Caco-2 (cell line): ENCODE measurements at regions of chr19 and their contacts with region 1.

Region 1: GRCh38 chr19:38929929-38930775 is at the start of gene SARS2:
- DNase-seq: peak; percentile 95
- H3K4me3 ChIP-seq: peak within 1 kb of the TSS; percentile 85
- H3K4me3 Mint-ChIP-seq: peak within 1 kb of the TSS; percentile 77
- H3K27ac Mint-ChIP-seq: peak within 1 kb of the TSS; percentile 99
- H3K4me1 ChIP-seq: 0 out of 2 replicates have a peak, but pooled peaks cover 5% of the 10 kb centered on the region
- H3K4me1 Mint-ChIP-seq: no peaks in the 10 kb centered on the region
- H3K27me3 ChIP-seq: no peaks in the 10 kb centered on the region
- H3K27me3 Mint-ChIP-seq: no peaks in the 10 kb centered on the region
- CTCF ChIP-seq: peak; percentile 98 to 99
- total RNA-seq, gene SARS2: 66.6 and 85.1 TPM in 2 replicates

Region 2: GRCh38 chr19:38647368-38647965 is 282.7 kb before region 1 on chr19 and contains the start of gene ACTN4:
- CTCF ChIA-PET with region 1: interaction called, 10 read pairs
- POLR2A ChIA-PET with region 1: interaction called, 3 read pairs
- intact Hi-C with region 1: no loop called
- DNase-seq: peak; percentile 98 to 100
- H3K4me3 ChIP-seq: peak within 1 kb of the TSS; percentile 100
- H3K4me3 Mint-ChIP-seq: peak within 1 kb of the TSS; percentile 90
- H3K27ac Mint-ChIP-seq: peak within 1 kb of the TSS; percentile 88
- H3K4me1 ChIP-seq: peaks cover 30% of the 10 kb centered on the region
- H3K4me1 Mint-ChIP-seq: peaks cover 16% of the 10 kb centered on the region
- H3K27me3 ChIP-seq: no peaks in the 10 kb centered on the region
- H3K27me3 Mint-ChIP-seq: no peaks in the 10 kb centered on the region
- CTCF ChIP-seq: no peak
- total RNA-seq, gene ACTN4: 605 and 658 TPM in 2 replicates

Region 3: DNA sequence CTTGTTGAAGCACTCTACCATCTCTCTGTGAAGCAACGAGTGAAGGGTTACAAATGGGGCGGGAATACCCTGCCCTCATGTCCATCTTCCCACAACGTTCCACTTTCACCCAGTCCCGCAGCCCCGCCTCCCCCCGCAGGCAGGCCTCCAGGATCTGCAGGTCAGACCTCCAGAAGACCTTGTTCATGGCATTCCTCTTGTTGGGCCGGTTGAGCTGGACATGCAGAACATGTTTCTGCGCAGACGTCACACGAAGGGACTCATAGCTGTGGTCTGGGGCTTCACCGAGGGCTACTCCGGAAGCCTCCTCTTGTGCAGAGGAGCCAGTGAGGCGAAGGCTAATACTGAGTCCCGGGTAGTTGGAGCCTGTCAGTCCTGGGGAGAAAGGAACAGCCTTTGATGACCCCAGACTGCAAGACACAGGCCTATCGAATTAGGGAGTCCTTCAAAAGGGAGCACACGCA is 99.0 kb before region 1 on chr19:
- CTCF ChIA-PET with region 1: interaction called, 8 read pairs
- POLR2A ChIA-PET with region 1: interaction called, 4 read pairs
- intact Hi-C with region 1: loop called (anchors 2 kb)
- DNase-seq: peak; percentile 91 to 96
- H3K4me3 ChIP-seq: peak overlapping the region; percentile 72
- H3K4me3 Mint-ChIP-seq: peak overlapping the region; percentile 71
- H3K27ac Mint-ChIP-seq: peak overlapping the region; percentile 97
- H3K4me1 ChIP-seq: peaks cover 22% of the 10 kb centered on the region
- H3K4me1 Mint-ChIP-seq: peaks cover 13% of the 10 kb centered on the region
- H3K27me3 ChIP-seq: no peaks in the 10 kb centered on the region
- H3K27me3 Mint-ChIP-seq: no peaks in the 10 kb centered on the region
- CTCF ChIP-seq: no peak

Region 4: DNA sequence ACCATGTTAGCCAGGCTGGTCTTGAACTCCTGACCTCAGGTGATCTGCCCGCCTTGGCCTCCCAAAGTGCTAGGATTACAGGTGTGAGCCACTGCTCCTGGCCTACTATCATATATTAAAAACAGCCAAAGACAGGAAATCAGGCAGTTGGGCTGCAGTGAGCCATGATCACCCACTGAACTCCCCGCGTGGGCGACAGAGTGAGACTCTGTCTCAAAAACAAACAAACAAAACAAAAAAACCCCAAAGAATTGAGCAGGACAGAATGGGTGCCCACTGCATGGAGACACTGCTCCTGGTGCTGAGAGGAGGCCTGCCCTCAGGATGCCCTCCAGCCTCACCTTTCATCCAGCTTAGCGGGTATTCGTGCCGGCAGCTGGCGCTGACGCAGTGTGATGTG is 46.9 kb before region 1 on chr19:
- CTCF ChIA-PET with region 1: interaction called, 11 read pairs
- POLR2A ChIA-PET with region 1: interaction called, 5 read pairs
- intact Hi-C with region 1: no loop called
- DNase-seq: no peak
- H3K4me3 ChIP-seq: no peak overlapping the region
- H3K4me3 Mint-ChIP-seq: no peak overlapping the region
- H3K27ac Mint-ChIP-seq: peak overlapping the region; percentile 54
- H3K4me1 ChIP-seq: peaks cover 54% of the 10 kb centered on the region
- H3K4me1 Mint-ChIP-seq: peaks cover 16% of the 10 kb centered on the region
- H3K27me3 ChIP-seq: no peaks in the 10 kb centered on the region
- H3K27me3 Mint-ChIP-seq: no peaks in the 10 kb centered on the region
- CTCF ChIP-seq: no peak

Region 5: DNA sequence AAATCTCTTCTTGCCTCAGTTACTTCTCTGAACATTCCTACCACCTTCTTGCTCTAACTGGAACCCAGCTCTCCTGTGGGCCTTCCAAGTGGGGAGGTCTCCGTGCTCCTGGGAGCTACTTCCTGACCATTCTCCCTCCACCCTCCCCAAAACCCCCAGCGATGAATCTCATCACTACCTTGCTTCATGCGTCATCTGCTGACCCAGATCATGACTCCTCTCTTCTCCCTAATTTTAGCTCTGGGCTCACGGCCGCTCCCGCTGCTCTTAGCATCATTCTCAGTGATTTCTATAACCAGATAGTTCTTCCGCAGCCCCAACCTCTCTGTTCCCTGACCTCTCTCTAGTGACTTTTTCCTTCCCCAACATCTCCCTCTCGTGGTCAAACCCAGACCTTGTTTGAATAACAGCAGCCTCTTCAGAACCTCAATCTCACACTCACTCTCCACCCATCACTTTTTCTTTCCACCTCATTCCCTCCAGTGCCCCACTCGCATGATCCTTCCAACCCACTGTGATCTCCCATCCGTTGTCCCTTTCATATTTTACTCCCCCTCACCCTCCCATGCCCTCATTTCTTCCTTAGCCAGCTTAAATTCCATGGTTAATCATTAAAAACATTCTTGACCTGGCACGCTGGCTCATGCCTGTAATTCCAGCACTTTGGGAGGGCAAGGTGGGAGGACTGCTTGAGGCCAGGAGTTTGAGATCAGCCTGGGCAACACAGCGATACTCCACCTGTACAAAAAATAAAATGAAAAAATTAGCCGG is 22.4 kb after region 1 on chr19:
- CTCF ChIA-PET with region 1: interaction called, 8 read pairs
- POLR2A ChIA-PET with region 1: interaction called, 6 read pairs
- intact Hi-C with region 1: loop called (anchors 1 kb)
- DNase-seq: peak; percentile 58 to 65
- H3K4me3 ChIP-seq: no peak overlapping the region
- H3K4me3 Mint-ChIP-seq: peak overlapping the region; percentile 13
- H3K27ac Mint-ChIP-seq: peak overlapping the region; percentile 45
- H3K4me1 ChIP-seq: peaks cover 18% of the 10 kb centered on the region
- H3K4me1 Mint-ChIP-seq: peaks cover 19% of the 10 kb centered on the region
- H3K27me3 ChIP-seq: no peaks in the 10 kb centered on the region
- H3K27me3 Mint-ChIP-seq: no peaks in the 10 kb centered on the region
- CTCF ChIP-seq: peak; percentile 26 to 39